Aorta (tissue), 5 donors: ENCODE measurements at regions of chr1 and their contacts with region 1.

Region 1: DNA sequence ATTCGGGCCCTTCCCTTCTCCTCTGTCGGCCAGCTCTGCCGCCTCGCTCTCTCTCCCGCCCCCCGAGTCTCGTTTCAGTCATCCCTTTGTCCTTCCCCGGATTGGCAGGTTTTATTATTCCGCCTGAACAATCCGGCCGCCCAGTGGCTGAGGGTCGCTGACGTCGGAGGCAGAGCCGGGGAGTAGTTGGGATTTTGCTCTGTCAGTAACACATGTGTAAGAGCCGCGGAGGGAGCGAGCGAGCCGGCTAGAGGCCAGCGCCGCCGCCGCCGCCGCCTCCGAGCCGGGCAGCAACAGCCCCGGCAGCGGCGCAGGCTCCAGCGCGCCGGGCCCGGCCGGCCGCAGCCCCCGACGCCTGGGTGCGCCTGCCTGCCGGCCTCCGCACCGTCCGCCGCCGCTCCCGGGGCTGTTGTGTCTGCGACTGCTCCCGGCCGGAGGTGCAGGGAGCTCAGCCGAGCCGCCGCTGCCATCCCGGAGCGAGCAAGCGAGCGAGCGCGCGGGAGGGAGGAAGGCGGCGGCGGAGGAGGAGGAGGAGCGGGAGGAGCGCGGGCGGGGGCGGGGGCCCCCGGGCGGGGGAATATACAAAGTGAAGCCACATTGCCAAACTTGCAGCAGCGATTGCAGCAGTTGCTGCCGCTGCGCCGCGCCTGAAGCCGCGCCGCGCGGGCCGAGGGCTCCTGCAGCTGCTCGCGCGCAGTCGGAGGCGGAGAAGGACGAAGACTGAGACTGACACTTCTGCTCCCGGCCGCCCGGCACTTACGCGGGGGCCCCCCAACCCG is at the start of gene LMO4:
- DNase-seq: peak; percentile 98
- ATAC-seq: peak; percentile 91
- H3K4me3 ChIP-seq: peak within 1 kb of the TSS; percentile 96
- H3K27ac ChIP-seq: peak within 1 kb of the TSS; percentile 98 to 99
- H3K4me1 ChIP-seq: no peaks in the 10 kb centered on the region
- H3K27me3 ChIP-seq: no peaks in the 10 kb centered on the region
- total RNA-seq, gene LMO4: 42.5 to 45.7 TPM

Region 2: GRCh38 chr1:86774305-86775295 is 553.9 kb before region 1 on chr1:
- intact Hi-C with region 1: loop called in 1 of 2 experiments (anchors 5 kb)
- DNase-seq: peak in 1 of 2 donors; percentile 87
- ATAC-seq: peak; percentile 69
- H3K4me3 ChIP-seq: no peak overlapping the region
- H3K27ac ChIP-seq: no peak overlapping the region
- H3K4me1 ChIP-seq: peaks cover 2 to 5% of the 10 kb centered on the region in 2 donors
- H3K27me3 ChIP-seq: no peaks in the 10 kb centered on the region

Region 3: GRCh38 chr1:87266284-87266683 is 62.2 kb before region 1 on chr1:
- intact Hi-C with region 1: no loop called
- DNase-seq: no peak
- ATAC-seq: no peak
- H3K4me3 ChIP-seq: no peak overlapping the region
- H3K27ac ChIP-seq: no peak overlapping the region
- H3K4me1 ChIP-seq: no peaks in the 10 kb centered on the region
- H3K27me3 ChIP-seq: no peaks in the 10 kb centered on the region

Region 4: DNA sequence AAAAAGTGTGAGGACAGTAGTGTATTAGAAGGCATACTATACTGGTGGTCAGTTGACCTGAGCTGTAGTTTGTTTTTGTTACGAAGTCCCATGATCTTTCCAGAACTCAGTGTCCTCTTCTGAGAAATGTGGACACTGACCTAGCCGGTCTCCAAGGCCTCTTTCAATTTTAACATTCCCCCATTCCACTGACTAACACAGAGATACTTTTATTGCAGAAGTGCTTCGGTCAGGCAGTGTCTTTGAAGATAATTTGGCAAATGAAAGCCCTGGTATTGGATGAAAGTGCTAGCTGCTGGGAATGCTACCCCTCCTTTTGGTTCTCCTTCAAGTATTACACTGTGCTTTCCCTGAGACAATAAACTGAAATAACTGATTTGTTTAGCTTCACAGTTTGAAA is 89.6 kb after region 1 on chr1:
- intact Hi-C with region 1: no loop called
- DNase-seq: no peak
- ATAC-seq: no peak
- H3K4me3 ChIP-seq: no peak overlapping the region
- H3K27ac ChIP-seq: no peak overlapping the region
- H3K4me1 ChIP-seq: no peaks in the 10 kb centered on the region
- H3K27me3 ChIP-seq: no peaks in the 10 kb centered on the region

Region 5: GRCh38 chr1:87665151-87665550 is 336.7 kb after region 1 on chr1:
- intact Hi-C with region 1: no loop called
- DNase-seq: no peak
- ATAC-seq: no peak
- H3K4me3 ChIP-seq: no peak overlapping the region
- H3K27ac ChIP-seq: no peak overlapping the region
- H3K4me1 ChIP-seq: no peaks in the 10 kb centered on the region
- H3K27me3 ChIP-seq: peaks cover 0 to 2% of the 10 kb centered on the region in 2 donors

Region 6: DNA sequence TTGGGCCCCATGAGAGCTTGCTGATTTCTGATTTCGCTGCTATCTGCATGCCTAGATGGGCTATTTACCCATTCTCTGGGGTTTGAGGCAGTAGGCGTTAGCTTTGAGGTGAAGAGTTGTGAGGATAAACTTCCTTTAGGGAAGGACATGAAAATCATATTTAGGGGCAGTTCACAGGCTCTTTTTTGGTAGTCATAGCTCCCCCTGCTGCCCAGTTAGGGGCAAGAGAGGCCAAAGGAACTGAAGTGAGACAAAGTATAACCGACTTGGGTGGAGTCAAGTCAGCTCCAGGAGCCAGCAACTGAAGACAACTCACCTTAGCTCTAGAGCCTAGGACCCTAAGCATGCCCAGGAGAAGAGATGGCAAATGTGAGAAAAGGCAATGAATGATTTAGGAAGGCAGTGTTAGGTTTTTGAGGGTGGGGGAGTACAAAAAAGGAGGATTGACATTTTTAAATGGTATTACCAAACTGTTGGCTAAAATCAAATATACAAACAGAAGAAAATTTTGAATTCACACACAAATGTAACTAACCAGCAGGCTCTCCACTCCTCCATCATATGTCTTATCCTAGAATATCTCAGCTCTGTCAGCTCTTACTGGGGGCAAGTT is 625.4 kb after region 1 on chr1:
- intact Hi-C with region 1: loop called (anchors 2 to 5 kb)
- DNase-seq: peak; percentile 66 to 70
- ATAC-seq: peak; percentile 69
- H3K4me3 ChIP-seq: no peak overlapping the region
- H3K27ac ChIP-seq: no peak overlapping the region
- H3K4me1 ChIP-seq: peaks cover 2 to 6% of the 10 kb centered on the region in 2 donors
- H3K27me3 ChIP-seq: peaks cover 0 to 2% of the 10 kb centered on the region in 2 donors

Region 7: GRCh38 chr1:88061492-88062177 is 733.2 kb after region 1 on chr1:
- intact Hi-C with region 1: loop called (anchors 1 to 5 kb)
- DNase-seq: peak in 1 of 2 donors; percentile 61
- ATAC-seq: peak; percentile 76
- H3K4me3 ChIP-seq: no peak overlapping the region
- H3K27ac ChIP-seq: no peak overlapping the region
- H3K4me1 ChIP-seq: peaks cover 0 to 2% of the 10 kb centered on the region in 2 donors
- H3K27me3 ChIP-seq: no peaks in the 10 kb centered on the region